Gastrocnemius medialis (tissue), 4 donors: ENCODE measurements at regions of chr1 and their contacts with region 1.

Region 1: GRCh38 chr1:236018885-236019453 is 45.9 kb downstream of the NID1 start:
- DNase-seq: peak; percentile 76 to 89
- ATAC-seq: peak; percentile 72 to 75
- H3K4me3 ChIP-seq: no peak overlapping the region
- H3K27ac ChIP-seq: peak overlapping the region; percentile 78 to 87 (median 83)
- H3K4me1 ChIP-seq: peaks cover 10 to 26% of the 10 kb centered on the region in 2 donors
- H3K27me3 ChIP-seq: no peaks in the 10 kb centered on the region
- CTCF ChIP-seq: no peak
- POLR2A ChIP-seq: peak in 1 of 2 donors; percentile 8

Region 2: GRCh38 chr1:235984041-235984825 is 34.7 kb before region 1 on chr1:
- in situ Hi-C with region 1: no loop called
- intact Hi-C with region 1: loop called (anchors 5 kb)
- DNase-seq: no peak
- ATAC-seq: no peak
- H3K4me3 ChIP-seq: no peak overlapping the region
- H3K27ac ChIP-seq: peak overlapping the region; percentile 45 to 63 (median 55)
- H3K4me1 ChIP-seq: no peaks in the 10 kb centered on the region
- H3K27me3 ChIP-seq: no peaks in the 10 kb centered on the region
- CTCF ChIP-seq: no peak
- POLR2A ChIP-seq: no peak

Region 3: GRCh38 chr1:236064674-236065508 is 45.9 kb after region 1 on chr1 and contains the start of gene NID1:
- in situ Hi-C with region 1: no loop called
- intact Hi-C with region 1: loop called (anchors 5 kb)
- DNase-seq: peak; percentile 58 to 78
- ATAC-seq: peak; percentile 64 to 70
- H3K4me3 ChIP-seq: peak within 1 kb of the TSS; percentile 57 to 74 (median 68)
- H3K27ac ChIP-seq: peak within 1 kb of the TSS; percentile 72 to 86 (median 86)
- H3K4me1 ChIP-seq: no peaks in the 10 kb centered on the region
- H3K27me3 ChIP-seq: peaks cover 16 to 33% (median 18%) of the 10 kb centered on the region in 3 donors
- CTCF ChIP-seq: peak in 4 of 5 experiments; percentile 26 to 36 (median 30)
- POLR2A ChIP-seq: peak; percentile 64 to 85
- total RNA-seq, gene NID1: 33.7 to 79.0 (median 51.7) TPM

Region 4: DNA sequence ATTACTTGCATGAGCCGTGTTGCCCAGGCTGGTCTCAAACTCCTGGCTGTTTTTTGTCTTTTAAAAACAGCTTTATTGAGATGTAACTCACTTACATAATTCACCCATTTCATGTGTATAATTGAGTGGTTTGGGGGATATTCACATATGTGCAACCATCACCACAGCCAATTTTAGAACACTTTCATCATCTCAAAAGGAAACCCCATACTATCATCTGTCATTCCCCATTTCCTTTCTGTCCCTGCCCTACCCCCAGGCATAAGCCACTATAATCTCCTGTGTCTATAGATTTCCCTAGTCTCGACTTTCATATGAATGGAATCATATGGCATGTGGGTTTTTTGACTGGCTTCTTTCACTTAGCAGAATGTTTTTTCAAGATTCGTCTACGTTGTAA is 166.7 kb after region 1 on chr1:
- in situ Hi-C with region 1: no loop called
- intact Hi-C with region 1: no loop called
- DNase-seq: no peak
- ATAC-seq: no peak
- H3K4me3 ChIP-seq: no peak overlapping the region
- H3K27ac ChIP-seq: no peak overlapping the region
- H3K4me1 ChIP-seq: no peaks in the 10 kb centered on the region
- H3K27me3 ChIP-seq: no peaks in the 10 kb centered on the region
- CTCF ChIP-seq: no peak
- POLR2A ChIP-seq: no peak